ENCODE measurements at regions of chr18 and their contacts with region 1.

Region 1: GRCh38 chr18:3585656-3586509 is 135.9 kb downstream of the TGIF1 start:
- DNase-seq: peak; percentile 85 to 88 (median 85)
- H3K4me3 ChIP-seq: no peak overlapping the region
- H3K27ac ChIP-seq: no peak overlapping the region
- H3K4me1 ChIP-seq: peaks cover 5 to 20% (median 16%) of the 10 kb centered on the region in 4 experiments
- H3K27me3 ChIP-seq: no peaks in the 10 kb centered on the region

Region 2: GRCh38 chr18:3441290-3441689 is 144.6 kb before region 1 on chr18:
- CTCF ChIA-PET with region 1: interaction called, 17 read pairs
- POLR2A ChIA-PET with region 1: no interaction called
- DNase-seq: peak; percentile 57 to 62 (median 59)
- H3K4me3 ChIP-seq: peak overlapping the region in 1 of 7 experiments; percentile 5
- H3K27ac ChIP-seq: no peak overlapping the region
- H3K4me1 ChIP-seq: peaks cover under 1 to 12% (median 4%) of the 10 kb centered on the region in 4 experiments
- H3K27me3 ChIP-seq: no peaks in the 10 kb centered on the region

Region 3: DNA sequence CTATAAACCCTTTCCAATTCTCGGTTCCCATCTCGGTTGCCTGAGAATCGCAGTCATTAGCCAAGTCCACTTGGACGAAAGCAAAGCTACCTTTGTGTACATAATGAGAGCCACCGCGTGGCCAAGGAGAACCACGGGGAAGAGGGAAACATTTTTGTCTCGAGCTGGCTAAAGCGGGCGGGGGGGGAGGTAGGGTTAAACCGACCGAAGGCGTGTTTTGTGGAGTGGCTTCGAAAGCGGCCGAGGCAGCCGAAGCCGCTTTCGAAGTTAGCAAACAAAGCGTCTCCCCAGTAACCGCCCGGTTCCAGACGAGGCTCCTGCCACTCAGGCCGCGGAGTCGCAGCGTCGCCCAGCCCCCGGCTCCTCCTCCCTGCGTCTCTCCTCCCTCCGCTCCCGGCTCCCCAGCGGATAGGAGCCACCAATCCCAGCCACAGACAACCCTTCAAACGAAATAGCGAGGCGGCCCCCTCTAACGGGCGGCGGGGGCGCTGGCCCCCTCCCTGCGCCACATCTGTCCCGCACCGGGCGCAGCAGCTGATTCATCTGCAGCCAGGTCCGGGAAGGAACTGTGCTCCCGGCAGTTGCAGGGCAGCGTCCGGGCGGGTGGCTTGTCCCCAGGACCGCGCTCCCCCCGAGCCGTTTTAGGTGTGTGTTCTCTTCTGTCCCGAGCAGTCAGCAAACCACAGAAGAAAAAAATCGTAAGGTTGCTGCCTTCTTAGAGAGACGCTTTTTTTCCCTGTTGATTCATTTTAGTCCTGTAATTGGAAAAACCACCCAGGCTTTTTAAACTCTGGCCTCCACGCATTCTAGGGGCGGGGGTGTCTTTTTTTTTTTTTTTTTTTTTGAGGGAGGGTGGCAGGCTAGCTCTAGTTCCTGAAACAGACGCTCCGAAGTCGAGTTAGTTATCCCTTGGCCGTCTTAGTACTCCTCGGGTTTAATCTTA is 137.7 kb before region 1 on chr18:
- CTCF ChIA-PET with region 1: interaction called, 17 read pairs
- POLR2A ChIA-PET with region 1: interaction called, 10 read pairs
- DNase-seq: peak; percentile 95 to 98 (median 96)
- H3K4me3 ChIP-seq: peak overlapping the region; percentile 42 to 95 (median 86)
- H3K27ac ChIP-seq: peak overlapping the region; percentile 95 to 98
- H3K4me1 ChIP-seq: peaks cover 13 to 62% (median 53%) of the 10 kb centered on the region in 4 experiments
- H3K27me3 ChIP-seq: no peaks in the 10 kb centered on the region

Region 4: DNA sequence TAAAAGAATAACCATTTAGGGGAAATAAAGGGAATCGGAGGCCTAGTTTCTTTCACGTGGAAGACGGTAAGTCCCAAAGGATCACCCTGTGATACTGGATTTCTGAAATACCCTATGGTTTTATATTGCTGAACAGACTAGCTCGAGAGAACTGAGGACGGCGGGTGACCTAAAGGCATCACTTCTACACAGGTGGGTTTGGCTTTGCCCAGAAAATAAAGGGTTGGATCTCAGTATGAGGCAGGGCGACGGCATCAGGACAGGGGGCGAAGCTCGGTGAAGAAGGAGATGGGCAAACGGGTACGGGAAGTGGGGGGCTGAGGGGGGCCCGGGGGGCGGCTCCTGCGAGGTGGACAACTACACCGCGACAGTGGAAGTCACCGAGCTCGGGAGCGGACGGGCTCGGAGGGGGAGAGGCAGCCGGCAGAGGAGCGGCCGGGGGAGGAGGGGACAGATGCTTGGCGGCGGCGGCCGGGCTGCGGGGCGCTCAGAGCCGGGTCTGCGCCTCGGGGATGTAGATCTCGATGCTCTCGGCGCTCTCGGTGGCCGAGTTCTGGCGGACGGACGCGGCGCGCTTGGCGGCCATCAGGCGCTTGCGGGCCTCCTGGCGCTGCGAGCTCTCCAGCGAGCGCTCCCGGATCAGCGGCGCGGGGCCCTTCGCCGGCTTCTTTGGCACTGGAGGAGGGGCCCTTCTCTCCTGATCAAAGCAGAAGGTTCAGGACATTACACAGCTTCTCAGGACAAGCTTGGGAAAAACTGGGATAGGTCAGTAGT is 87.0 kb before region 1 on chr18:
- CTCF ChIA-PET with region 1: interaction called, 18 read pairs
- POLR2A ChIA-PET with region 1: no interaction called
- DNase-seq: peak; percentile 33 to 72 (median 57)
- H3K4me3 ChIP-seq: peak overlapping the region; percentile 46 to 78 (median 63)
- H3K27ac ChIP-seq: no peak overlapping the region
- H3K4me1 ChIP-seq: peaks cover 9 to 23% (median 19%) of the 10 kb centered on the region in 4 experiments
- H3K27me3 ChIP-seq: peaks cover 0 to 4% (median 0%) of the 10 kb centered on the region in 5 experiments